ENCODE measurements at regions of chr14 and their contacts with region 1.

Region 1: GRCh38 chr14:36207500-36207899 is 31.0 kb upstream of the PTCSC3 start:
- DNase-seq: peak; percentile 35
- ATAC-seq: peak; percentile 70
- H3K4me3 ChIP-seq: no peak overlapping the region
- H3K27ac ChIP-seq: no peak overlapping the region
- H3K4me1 ChIP-seq: no peaks in the 10 kb centered on the region
- H3K27me3 ChIP-seq: peaks cover 2 to 37% of the 10 kb centered on the region in 2 experiments
- CTCF ChIP-seq: peak; percentile 53
- EP300 ChIP-seq: no peak
- POLR2A ChIP-seq: no peak
- RAD21 ChIP-seq: no peak

Region 2: DNA sequence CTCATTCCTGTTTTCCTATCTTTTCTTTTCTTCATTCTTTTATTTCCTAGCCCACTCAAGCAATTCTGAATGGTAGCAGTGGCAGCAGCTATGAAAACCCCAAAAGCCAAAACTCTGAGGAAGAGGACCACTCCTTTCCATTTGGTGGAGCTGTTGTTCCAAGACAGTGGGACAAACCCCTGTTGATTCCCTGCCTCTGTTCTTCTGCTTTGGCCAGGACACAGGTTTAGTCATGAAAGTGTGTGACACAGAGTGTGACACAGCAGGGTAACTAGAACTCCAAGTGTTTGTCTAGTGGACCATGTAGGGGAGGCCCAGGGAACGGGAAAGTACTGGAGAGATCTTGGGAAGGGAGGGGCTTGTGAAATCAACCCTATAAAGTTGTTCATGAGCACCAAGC is 102.1 kb before region 1 on chr14:
- CTCF ChIA-PET with region 1: no interaction called
- POLR2A ChIA-PET with region 1: no interaction called
- in situ Hi-C with region 1: no loop called
- intact Hi-C with region 1: no loop called
- DNase-seq: peak; percentile 21
- ATAC-seq: peak; percentile 56
- H3K4me3 ChIP-seq: no peak overlapping the region
- H3K27ac ChIP-seq: no peak overlapping the region
- H3K4me1 ChIP-seq: no peaks in the 10 kb centered on the region
- H3K27me3 ChIP-seq: no peaks in the 10 kb centered on the region
- CTCF ChIP-seq: peak; percentile 57
- EP300 ChIP-seq: no peak
- POLR2A ChIP-seq: no peak
- RAD21 ChIP-seq: no peak

Region 3: GRCh38 chr14:36176524-36176923 is 31.0 kb before region 1 on chr14 and contains the start of gene PTCSC3:
- CTCF ChIA-PET with region 1: no interaction called
- POLR2A ChIA-PET with region 1: no interaction called
- in situ Hi-C with region 1: no loop called
- intact Hi-C with region 1: no loop called
- DNase-seq: no peak
- ATAC-seq: no peak
- H3K4me3 ChIP-seq: no peak within 1 kb of the TSS
- H3K27ac ChIP-seq: no peak within 1 kb of the TSS
- H3K4me1 ChIP-seq: no peaks in the 10 kb centered on the region
- H3K27me3 ChIP-seq: peaks cover 0 to 13% of the 10 kb centered on the region in 2 experiments; a peak in 3 of 5 replicates
- CTCF ChIP-seq: no peak
- EP300 ChIP-seq: no peak
- POLR2A ChIP-seq: no peak
- RAD21 ChIP-seq: no peak
- total RNA-seq, gene PTCSC3: not detected in 2 replicates

Region 4: GRCh38 chr14:36254020-36254624 is 46.6 kb after region 1 on chr14:
- CTCF ChIA-PET with region 1: no interaction called
- POLR2A ChIA-PET with region 1: no interaction called
- in situ Hi-C with region 1: no loop called
- intact Hi-C with region 1: loop called (anchors 2 kb)
- DNase-seq: peak; percentile 56
- ATAC-seq: peak; percentile 97
- H3K4me3 ChIP-seq: no peak overlapping the region
- H3K27ac ChIP-seq: no peak overlapping the region
- H3K4me1 ChIP-seq: no peaks in the 10 kb centered on the region
- H3K27me3 ChIP-seq: peaks cover 0 to 14% of the 10 kb centered on the region in 2 experiments; a peak in 2 of 5 replicates
- CTCF ChIP-seq: peak; percentile 43
- EP300 ChIP-seq: no peak
- POLR2A ChIP-seq: no peak
- RAD21 ChIP-seq: no peak

Region 5: GRCh38 chr14:36520601-36521525 is 313.4 kb after region 1 on chr14:
- CTCF ChIA-PET with region 1: no interaction called
- POLR2A ChIA-PET with region 1: no interaction called
- in situ Hi-C with region 1: loop called (anchors 10 kb)
- intact Hi-C with region 1: loop called (anchors 10 kb)
- DNase-seq: peak; percentile 44
- ATAC-seq: peak; percentile 87
- H3K4me3 ChIP-seq: peak overlapping the region in 2 of 3 experiments; percentile 1 to 20; a peak in 2 of 6 replicates
- H3K27ac ChIP-seq: no peak overlapping the region
- H3K4me1 ChIP-seq: 0 out of 2 replicates have a peak, but pooled peaks cover 15% of the 10 kb centered on the region
- H3K27me3 ChIP-seq: peaks cover 55 to 92% of the 10 kb centered on the region in 2 experiments
- CTCF ChIP-seq: peak; percentile 83
- EP300 ChIP-seq: no peak
- POLR2A ChIP-seq: no peak
- RAD21 ChIP-seq: peak; percentile 60; the same call in 1 of the 2 replicates

Measured in HepG2 (cell line).